Ovary (tissue), 10 donors: ENCODE measurements at regions of chr5 and their contacts with region 1.

Region 1: GRCh38 chr5:160342403-160342941 is 28.0 kb downstream of the C1QTNF2 start:
- DNase-seq: peak; percentile 38 to 64 (median 49)
- H3K4me3 ChIP-seq: no peak overlapping the region
- H3K27ac ChIP-seq: peak overlapping the region in 1 of 2 donors; percentile 79
- H3K4me1 ChIP-seq: peaks cover 16% of the 10 kb centered on the region
- H3K27me3 ChIP-seq: no peaks in the 10 kb centered on the region
- CTCF ChIP-seq: no peak
- EP300 ChIP-seq: no peak
- POLR2A ChIP-seq: no peak

Region 2: DNA sequence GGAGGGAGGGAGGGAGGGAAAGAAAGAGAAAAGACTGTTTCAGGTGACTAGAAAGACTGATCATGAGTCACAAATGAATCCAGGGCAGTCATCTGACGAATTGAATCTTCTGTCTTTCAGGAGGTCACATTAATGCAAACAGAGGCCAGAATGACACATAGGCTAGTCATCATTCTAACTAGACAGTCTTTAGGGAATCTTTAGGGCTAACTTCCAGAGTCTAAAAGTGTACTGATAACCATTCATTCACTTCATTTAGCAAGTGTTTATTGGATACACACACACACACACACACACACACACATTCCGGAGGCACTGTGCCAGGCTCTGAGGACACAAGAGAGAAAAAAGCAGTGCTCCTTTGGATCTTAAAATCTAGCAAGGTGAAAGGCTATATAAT is 1399.4 kb before region 1 on chr5:
- intact Hi-C with region 1: no loop called
- DNase-seq: peak in 3 of 5 donors; percentile 31 to 42 (median 34)
- H3K4me3 ChIP-seq: no peak overlapping the region
- H3K27ac ChIP-seq: no peak overlapping the region
- H3K4me1 ChIP-seq: peaks cover 4% of the 10 kb centered on the region
- H3K27me3 ChIP-seq: no peaks in the 10 kb centered on the region
- CTCF ChIP-seq: no peak
- EP300 ChIP-seq: no peak
- POLR2A ChIP-seq: no peak

Region 3: DNA sequence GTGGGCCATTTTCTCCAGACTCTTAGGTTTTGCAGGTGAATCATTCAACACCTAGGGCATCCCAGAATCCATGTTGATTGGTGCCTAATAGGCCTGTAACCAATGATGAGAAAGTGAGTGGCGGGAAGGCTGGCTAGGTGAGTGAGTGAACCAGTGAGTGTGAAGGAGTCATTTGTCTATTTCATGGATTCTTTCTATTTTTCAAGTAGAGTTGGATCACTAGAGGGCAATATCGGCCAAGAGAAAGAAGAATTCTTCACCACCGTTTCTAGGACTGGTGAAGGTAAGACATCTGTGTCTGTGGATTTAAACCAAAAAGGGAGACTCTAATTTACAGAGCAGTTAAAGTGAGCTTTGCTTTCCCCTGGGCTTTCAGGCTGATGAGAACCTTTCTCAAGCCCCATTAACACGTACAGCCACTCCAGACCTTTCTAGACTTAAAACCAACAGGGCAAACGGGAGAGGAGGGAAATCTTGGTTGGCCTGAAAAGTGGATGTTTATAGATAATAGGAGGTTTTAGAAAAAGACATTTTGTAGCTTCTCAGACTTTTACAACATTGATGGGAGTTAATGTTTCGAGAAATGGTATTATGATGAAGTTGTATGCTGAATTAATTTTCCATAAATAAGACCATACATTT is 897.9 kb before region 1 on chr5:
- intact Hi-C with region 1: loop called in 1 of 4 experiments (anchors 10 kb)
- DNase-seq: no peak
- H3K4me3 ChIP-seq: no peak overlapping the region
- H3K27ac ChIP-seq: no peak overlapping the region
- H3K4me1 ChIP-seq: no peaks in the 10 kb centered on the region
- H3K27me3 ChIP-seq: no peaks in the 10 kb centered on the region
- CTCF ChIP-seq: peak; percentile 13 to 57 (median 53)
- EP300 ChIP-seq: no peak
- POLR2A ChIP-seq: no peak

Region 4: GRCh38 chr5:160030631-160031377 is 311.7 kb before region 1 on chr5:
- intact Hi-C with region 1: loop called in 1 of 4 experiments (anchors 5 kb)
- DNase-seq: no peak
- H3K4me3 ChIP-seq: no peak overlapping the region
- H3K27ac ChIP-seq: no peak overlapping the region
- H3K4me1 ChIP-seq: peaks cover 4% of the 10 kb centered on the region
- H3K27me3 ChIP-seq: no peaks in the 10 kb centered on the region
- CTCF ChIP-seq: no peak
- EP300 ChIP-seq: no peak
- POLR2A ChIP-seq: no peak

Region 5: GRCh38 chr5:160044967-160045366 is 297.5 kb before region 1 on chr5:
- intact Hi-C with region 1: no loop called
- DNase-seq: no peak
- H3K4me3 ChIP-seq: no peak overlapping the region
- H3K27ac ChIP-seq: no peak overlapping the region
- H3K4me1 ChIP-seq: no peaks in the 10 kb centered on the region
- H3K27me3 ChIP-seq: no peaks in the 10 kb centered on the region
- CTCF ChIP-seq: no peak
- EP300 ChIP-seq: no peak
- POLR2A ChIP-seq: no peak

Region 6: DNA sequence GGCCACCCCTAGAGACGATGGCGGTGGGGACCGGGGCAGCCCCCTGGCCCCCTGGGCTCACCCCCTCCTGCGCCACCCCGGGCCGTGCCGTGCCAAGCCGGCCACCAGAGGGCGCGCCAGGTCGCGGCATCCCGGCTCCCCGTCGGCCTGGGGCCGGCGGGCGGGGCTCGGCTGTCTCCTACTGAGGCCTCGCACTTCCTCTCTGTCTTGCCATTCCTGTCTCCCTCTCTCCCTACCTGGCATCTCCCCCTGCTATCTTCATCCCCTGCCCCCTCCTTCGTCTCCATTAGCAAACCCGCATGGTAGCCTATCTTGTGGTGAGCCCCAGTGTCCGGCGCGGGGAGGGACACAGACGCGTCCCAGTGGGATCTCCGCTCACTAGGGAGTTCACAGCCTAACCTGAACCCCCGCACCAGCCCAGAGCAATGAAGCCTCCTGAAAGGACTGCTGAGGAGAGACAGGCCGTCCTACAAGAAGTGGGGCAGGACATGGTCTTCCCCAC is 143.0 kb before region 1 on chr5:
- intact Hi-C with region 1: loop called (anchors 1 to 5 kb)
- DNase-seq: peak; percentile 68 to 87 (median 80)
- H3K4me3 ChIP-seq: peak overlapping the region; percentile 28
- H3K27ac ChIP-seq: no peak overlapping the region
- H3K4me1 ChIP-seq: peaks cover 1% of the 10 kb centered on the region
- H3K27me3 ChIP-seq: no peaks in the 10 kb centered on the region
- CTCF ChIP-seq: peak; percentile 83 to 95 (median 93)
- EP300 ChIP-seq: no peak
- POLR2A ChIP-seq: no peak